ENCODE measurements at regions of chr15 and their contacts with region 1.

Region 1: DNA sequence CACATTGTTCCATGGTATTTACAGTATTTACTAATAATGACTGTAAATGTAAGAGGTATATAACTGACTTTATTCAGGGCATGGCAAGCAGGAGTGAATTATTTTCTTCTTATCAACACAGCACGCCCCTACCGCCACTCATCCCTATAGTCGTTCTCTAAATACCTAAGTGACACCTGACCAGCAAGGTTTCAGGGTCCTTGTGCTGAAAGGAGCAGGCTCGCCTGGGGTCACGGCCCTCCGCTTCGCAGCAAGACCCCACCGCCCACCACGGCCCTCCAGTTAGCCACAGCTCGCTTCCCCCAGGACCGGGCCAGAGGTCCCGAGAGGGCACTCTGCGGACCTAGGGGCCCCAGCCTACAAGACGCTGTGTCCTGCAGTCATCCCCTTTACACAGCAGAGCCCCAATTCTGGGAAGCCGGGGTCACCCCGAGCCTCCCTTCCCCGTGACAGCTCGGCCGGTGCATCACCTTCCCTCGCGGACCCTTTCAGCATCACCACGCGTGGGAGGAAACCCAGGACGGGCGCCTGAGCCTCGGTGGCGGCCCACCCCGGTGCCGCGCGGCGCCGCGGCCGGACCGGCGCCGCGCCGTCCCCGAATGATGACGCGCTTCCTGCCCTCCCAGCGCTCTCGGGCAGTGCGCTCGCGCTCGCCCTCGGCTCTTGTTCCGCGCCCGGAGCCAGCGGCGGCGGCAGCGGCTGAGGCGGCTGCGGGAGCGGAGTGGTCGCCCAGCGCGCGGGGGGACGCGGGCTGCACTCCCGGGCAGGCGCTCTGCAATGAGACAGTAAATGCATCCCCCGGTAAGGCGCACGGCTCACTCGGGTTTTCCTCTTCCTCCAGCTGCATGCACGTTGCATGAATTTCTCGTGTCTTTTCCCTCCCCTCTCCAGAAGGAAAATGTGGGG is 225.1 kb upstream of the C2CD4B start:
- DNase-seq: peak; percentile 85
- ATAC-seq: peak; percentile 87

Region 2: DNA sequence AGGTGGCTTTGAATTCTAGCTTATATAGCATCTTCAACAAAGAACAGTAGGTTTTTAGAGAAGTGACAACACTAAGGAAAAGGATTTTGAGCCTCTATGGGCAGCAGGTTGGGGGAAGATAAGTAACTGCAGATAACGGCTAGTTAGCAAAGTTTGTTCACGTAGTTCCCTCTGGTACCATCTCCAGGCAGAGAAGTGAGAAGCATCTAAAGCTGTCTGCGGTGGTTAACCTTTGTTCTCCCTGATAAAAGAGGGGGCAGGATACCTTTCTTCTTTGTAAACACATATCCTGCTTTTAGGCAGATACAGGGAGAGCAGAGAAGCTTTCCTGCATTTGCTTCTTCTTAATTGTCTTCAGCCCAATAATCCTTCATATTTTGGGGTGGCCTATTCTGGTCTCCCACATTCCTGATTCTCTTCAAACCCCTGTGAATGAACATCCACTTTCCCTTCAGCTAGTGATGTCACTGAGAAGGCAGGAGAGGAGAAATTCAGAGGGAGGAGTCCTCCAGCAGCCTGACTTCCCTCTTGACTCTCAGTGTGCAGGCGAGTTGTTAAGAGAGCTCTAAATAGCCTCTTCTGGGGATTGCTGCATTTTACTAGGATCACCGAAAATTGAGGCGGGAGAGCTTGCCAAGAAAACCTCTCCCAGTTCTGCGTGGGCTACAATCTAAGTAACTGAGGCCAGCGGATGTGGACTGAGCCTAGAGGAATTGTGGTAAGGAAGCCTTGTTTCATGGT is 168.7 kb after region 1 on chr15:
- intact Hi-C with region 1: loop called (anchors 10 kb)
- DNase-seq: peak; percentile 46
- ATAC-seq: peak; percentile 85

Region 3: DNA sequence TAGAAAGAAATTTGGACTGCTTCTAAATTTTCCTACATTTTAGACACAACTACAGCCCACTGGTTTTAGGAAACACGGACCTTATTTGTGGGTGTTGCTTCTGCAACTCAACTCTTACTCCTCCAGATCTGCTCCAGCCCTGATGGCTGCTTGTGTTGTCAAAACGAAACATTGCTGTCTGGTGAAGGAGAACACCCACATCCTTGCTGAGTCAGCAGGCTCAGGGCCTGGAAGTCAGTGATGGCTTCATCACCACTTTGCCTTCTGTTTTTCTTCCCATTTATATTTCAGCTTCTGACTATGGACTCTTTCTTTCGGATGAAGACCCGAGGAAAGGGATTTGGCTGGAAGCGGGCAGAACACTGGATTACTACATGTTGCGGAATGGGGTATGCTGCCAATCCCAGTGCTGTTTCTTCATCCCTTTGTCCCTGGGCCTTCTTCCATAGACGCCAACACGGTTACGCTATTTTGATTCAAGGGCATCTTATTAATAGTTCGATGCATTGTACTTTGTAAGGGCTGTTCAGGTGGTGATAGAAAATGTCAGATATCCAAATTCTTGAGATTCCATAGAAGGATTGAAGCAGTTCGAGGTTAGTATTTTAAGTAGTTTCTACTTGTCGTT is 259.8 kb after region 1 on chr15:
- intact Hi-C with region 1: loop called (anchors 10 kb)
- DNase-seq: peak; percentile 43
- ATAC-seq: peak; percentile 77

Measured in left ventricle myocardium superior (tissue), 1 donor.